ENCODE measurements at regions of chr2 and their contacts with region 1.

Region 1: DNA sequence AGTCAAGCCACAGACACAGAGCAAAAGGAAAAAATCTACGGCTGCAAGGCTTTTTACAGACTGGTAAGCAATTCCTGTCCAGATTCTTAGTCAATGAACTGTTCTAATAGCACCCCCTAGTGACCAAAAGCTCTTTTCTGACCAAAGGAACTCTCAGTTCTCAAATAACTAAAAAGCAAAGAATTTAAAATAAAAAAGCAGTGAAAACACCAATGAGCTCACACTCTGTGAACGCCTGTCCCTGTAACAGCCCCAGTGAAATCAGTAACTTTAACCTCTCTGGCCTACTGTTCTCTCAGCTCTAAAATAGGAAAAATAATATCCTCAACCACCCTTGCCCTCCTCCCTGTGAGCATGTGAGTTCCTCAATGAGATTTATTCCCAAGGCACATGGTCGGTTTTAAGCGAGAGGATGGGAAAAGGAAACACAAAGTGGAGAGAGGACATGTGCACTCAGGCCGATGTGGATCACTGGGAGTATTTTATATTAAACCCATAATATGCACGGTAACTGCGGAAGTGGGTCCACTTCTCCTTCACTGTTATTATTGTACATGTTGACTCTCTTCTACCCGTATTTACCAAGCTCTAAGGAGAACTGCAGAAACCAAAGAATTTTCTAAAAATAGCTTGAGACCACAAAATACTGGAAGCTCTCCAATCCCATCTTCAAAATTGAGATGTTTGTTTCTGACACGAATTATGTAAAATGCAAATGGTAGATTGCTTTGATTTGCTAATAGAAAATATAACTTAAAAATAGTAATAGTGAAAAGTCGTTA is 128.5 kb downstream of the STK39 start:
- DNase-seq: peak; percentile 22
- H3K27ac ChIP-seq: no peak overlapping the region
- CTCF ChIP-seq: peak; percentile 65; the same call in 1 of the 2 replicates

Region 2: GRCh38 chr2:167264380-167264779 is 854.5 kb before region 1 on chr2:
- CTCF ChIA-PET with region 1: interaction called, 15 read pairs
- POLR2A ChIA-PET with region 1: no interaction called
- DNase-seq: no peak
- H3K27ac ChIP-seq: no peak overlapping the region
- CTCF ChIP-seq: no peak

Region 3: GRCh38 chr2:168749297-168749696 is 630.4 kb after region 1 on chr2:
- CTCF ChIA-PET with region 1: no interaction called
- POLR2A ChIA-PET with region 1: no interaction called
- DNase-seq: no peak
- H3K27ac ChIP-seq: no peak overlapping the region
- CTCF ChIP-seq: no peak

Measured in RWPE1 (cell line).